H1 (cell line): ENCODE measurements at regions of chr9 and their contacts with region 1.

Region 1: GRCh38 chr9:4548811-4549725 is 58.8 kb downstream of the SLC1A1 start:
- DNase-seq: peak in 1 of 2 experiments; percentile 82
- H3K4me3 ChIP-seq: no peak overlapping the region
- H3K27ac ChIP-seq: no peak overlapping the region
- H3K4me1 ChIP-seq: no peaks in the 10 kb centered on the region
- H3K27me3 ChIP-seq: no peaks in the 10 kb centered on the region
- CTCF ChIP-seq: peak; percentile 85 to 94 (median 87)
- EP300 ChIP-seq: peak in 1 of 2 experiments; percentile 62; a peak in 1 of 3 replicates
- POLR2A ChIP-seq: no peak
- RAD21 ChIP-seq: peak; percentile 78 to 84

Region 2: GRCh38 chr9:4382722-4383317 is 166.2 kb before region 1 on chr9:
- CTCF ChIA-PET with region 1: interaction called, 55 read pairs
- POLR2A ChIA-PET with region 1: no interaction called
- DNase-seq: no peak
- H3K4me3 ChIP-seq: no peak overlapping the region
- H3K27ac ChIP-seq: no peak overlapping the region
- H3K4me1 ChIP-seq: no peaks in the 10 kb centered on the region
- H3K27me3 ChIP-seq: no peaks in the 10 kb centered on the region
- CTCF ChIP-seq: peak in 2 of 3 experiments; percentile 65 to 68; a peak in 3 of 4 replicates
- EP300 ChIP-seq: no peak
- POLR2A ChIP-seq: no peak
- RAD21 ChIP-seq: peak; percentile 87 to 90

Region 3: GRCh38 chr9:4510546-4511322 is 38.3 kb before region 1 on chr9:
- CTCF ChIA-PET with region 1: interaction called, 23 read pairs
- POLR2A ChIA-PET with region 1: interaction called, 3 read pairs
- DNase-seq: no peak
- H3K4me3 ChIP-seq: no peak overlapping the region
- H3K27ac ChIP-seq: no peak overlapping the region
- H3K4me1 ChIP-seq: peaks cover 0 to 16% (median 13%) of the 10 kb centered on the region in 4 experiments; a peak in 5 of 7 replicates
- H3K27me3 ChIP-seq: no peaks in the 10 kb centered on the region; a peak in 1 of 7 replicates
- CTCF ChIP-seq: no peak
- EP300 ChIP-seq: no peak
- POLR2A ChIP-seq: no peak
- RAD21 ChIP-seq: no peak

Region 4: GRCh38 chr9:4530375-4530774 is 18.7 kb before region 1 on chr9:
- CTCF ChIA-PET with region 1: interaction called, 11 read pairs
- POLR2A ChIA-PET with region 1: no interaction called
- DNase-seq: no peak
- H3K4me3 ChIP-seq: no peak overlapping the region
- H3K27ac ChIP-seq: no peak overlapping the region
- H3K4me1 ChIP-seq: no peaks in the 10 kb centered on the region; a peak in 1 of 7 replicates
- H3K27me3 ChIP-seq: no peaks in the 10 kb centered on the region
- CTCF ChIP-seq: no peak
- EP300 ChIP-seq: no peak
- POLR2A ChIP-seq: no peak
- RAD21 ChIP-seq: no peak

Region 5: DNA sequence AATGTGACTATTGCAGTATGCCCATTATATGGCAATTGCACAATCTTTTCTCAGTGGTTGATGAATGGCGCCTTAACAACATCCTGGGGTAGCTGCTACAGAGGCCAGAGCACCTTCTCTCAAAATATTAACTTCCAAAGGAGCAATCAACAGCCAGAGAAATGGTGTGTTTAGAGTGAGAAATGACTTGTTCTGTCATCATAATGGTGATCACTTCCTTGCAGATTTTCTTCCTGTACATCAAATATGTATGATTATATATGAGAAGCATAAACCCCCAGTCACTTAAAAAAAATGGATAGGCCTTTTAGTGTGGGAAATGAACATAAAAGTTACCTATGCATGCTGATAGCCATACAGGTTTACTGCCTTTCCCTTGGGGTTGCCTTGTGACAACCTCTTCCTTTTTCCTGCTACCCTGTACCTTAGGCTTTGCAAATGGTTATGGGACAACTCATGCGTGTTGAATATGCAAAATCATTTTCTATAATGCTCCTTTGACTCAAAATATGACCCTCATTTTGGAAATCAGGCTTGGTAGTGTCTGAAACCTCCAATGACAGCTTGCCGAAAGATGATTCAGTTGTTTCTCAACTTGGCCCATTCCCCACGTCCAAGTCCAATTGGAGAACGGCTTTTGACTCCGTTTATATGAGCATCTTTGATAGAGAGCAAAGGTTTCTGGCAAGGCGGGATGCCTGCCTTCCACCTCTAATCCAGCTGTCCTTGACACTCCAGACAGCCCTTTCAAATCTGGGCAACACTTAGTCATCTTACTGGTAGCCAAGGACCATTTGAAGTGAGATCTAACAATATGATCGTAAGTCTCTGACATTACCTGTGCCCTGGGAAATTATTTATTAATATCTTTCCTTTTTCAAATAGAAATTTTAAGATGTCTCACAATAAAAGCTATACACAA is 10.5 kb after region 1 on chr9:
- CTCF ChIA-PET with region 1: interaction called, 44 read pairs
- POLR2A ChIA-PET with region 1: no interaction called
- DNase-seq: no peak
- H3K4me3 ChIP-seq: no peak overlapping the region
- H3K27ac ChIP-seq: no peak overlapping the region
- H3K4me1 ChIP-seq: no peaks in the 10 kb centered on the region
- H3K27me3 ChIP-seq: no peaks in the 10 kb centered on the region
- CTCF ChIP-seq: no peak
- EP300 ChIP-seq: no peak
- POLR2A ChIP-seq: no peak
- RAD21 ChIP-seq: no peak

Region 6: DNA sequence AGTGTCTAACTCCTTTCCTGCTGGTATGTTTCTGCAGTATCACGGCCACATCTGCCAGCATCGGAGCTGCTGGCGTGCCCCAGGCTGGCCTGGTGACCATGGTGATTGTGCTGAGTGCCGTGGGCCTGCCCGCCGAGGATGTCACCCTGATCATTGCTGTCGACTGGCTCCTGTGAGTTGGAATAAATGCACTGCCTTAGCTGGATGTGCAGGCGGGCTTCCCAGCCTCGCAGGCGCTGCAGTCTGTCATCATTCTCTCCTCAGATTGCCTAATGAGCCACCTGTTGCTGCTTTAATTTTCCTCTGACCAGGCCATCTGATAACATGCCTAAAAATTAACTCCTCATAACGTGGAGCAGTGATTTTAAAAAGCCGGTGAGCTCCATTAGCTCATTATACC is 33.9 kb after region 1 on chr9:
- CTCF ChIA-PET with region 1: interaction called, 10 read pairs
- POLR2A ChIA-PET with region 1: no interaction called
- DNase-seq: no peak
- H3K4me3 ChIP-seq: no peak overlapping the region
- H3K27ac ChIP-seq: no peak overlapping the region
- H3K4me1 ChIP-seq: no peaks in the 10 kb centered on the region
- H3K27me3 ChIP-seq: no peaks in the 10 kb centered on the region
- CTCF ChIP-seq: no peak
- EP300 ChIP-seq: no peak
- POLR2A ChIP-seq: no peak
- RAD21 ChIP-seq: no peak

Region 7: GRCh38 chr9:4640027-4640426 is 91.0 kb after region 1 on chr9:
- CTCF ChIA-PET with region 1: interaction called, 23 read pairs
- POLR2A ChIA-PET with region 1: no interaction called
- DNase-seq: no peak
- H3K4me3 ChIP-seq: no peak overlapping the region
- H3K27ac ChIP-seq: no peak overlapping the region
- H3K4me1 ChIP-seq: no peaks in the 10 kb centered on the region
- H3K27me3 ChIP-seq: no peaks in the 10 kb centered on the region
- CTCF ChIP-seq: peak in 2 of 3 experiments; percentile 54 to 65; a peak in 3 of 4 replicates
- EP300 ChIP-seq: no peak
- POLR2A ChIP-seq: no peak
- RAD21 ChIP-seq: peak; percentile 86 to 87